SK-N-SH (cell line): ENCODE measurements at regions of chr4 and their contacts with region 1.

Region 1: GRCh38 chr4:167622481-167623246 is 388.4 kb upstream of the SPOCK3 start:
- DNase-seq: peak; percentile 53
- H3K4me3 ChIP-seq: no peak overlapping the region; a peak in 1 of 4 replicates
- H3K27ac ChIP-seq: no peak overlapping the region
- H3K4me1 ChIP-seq: no peaks in the 10 kb centered on the region
- H3K27me3 ChIP-seq: no peaks in the 10 kb centered on the region
- CTCF ChIP-seq: peak; percentile 90
- EP300 ChIP-seq: no peak
- RAD21 ChIP-seq: peak; percentile 65

Region 2: DNA sequence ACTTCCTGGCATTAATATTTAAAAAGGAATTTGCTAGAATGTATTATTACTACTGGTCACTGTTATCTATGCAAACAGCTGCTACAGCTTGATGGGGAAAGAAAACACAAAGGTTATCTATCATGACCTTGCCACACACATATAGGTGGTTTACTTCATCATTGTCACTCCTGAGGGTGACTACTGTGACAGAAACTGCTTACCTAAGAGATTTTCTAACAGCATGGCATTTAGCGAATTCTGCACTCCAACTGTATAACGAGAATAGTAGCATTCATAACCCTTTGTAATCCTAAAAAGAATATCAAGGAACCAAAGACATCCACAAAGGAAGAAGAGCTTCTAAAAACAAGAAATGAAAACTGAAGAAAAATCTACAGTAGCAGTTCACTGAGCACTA is 313.8 kb before region 1 on chr4:
- CTCF ChIA-PET with region 1: no interaction called
- POLR2A ChIA-PET with region 1: no interaction called
- DNase-seq: no peak
- H3K4me3 ChIP-seq: no peak overlapping the region
- H3K27ac ChIP-seq: no peak overlapping the region
- H3K4me1 ChIP-seq: no peaks in the 10 kb centered on the region
- H3K27me3 ChIP-seq: no peaks in the 10 kb centered on the region
- CTCF ChIP-seq: no peak
- EP300 ChIP-seq: no peak
- RAD21 ChIP-seq: no peak

Region 3: DNA sequence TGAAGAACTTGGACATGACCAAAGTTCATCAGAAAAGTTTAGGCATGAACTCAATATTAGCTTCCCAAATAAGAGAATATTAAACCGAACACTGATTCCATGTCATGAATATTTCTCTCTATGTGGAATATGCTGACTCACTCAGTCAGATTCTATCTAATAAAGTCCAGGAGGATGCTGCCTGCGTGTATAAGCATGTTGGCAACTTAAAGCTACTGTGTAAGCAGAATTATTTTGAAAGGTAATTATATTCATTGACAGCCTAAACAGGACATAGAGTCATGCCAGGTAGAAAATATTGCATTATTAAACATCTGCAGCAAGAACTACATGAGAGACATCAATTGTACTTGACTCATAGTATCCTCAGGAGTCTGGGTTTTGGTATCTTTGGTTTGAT is 20.5 kb before region 1 on chr4:
- CTCF ChIA-PET with region 1: interaction called, 15 read pairs
- POLR2A ChIA-PET with region 1: no interaction called
- DNase-seq: no peak
- H3K4me3 ChIP-seq: no peak overlapping the region
- H3K27ac ChIP-seq: no peak overlapping the region
- H3K4me1 ChIP-seq: no peaks in the 10 kb centered on the region
- H3K27me3 ChIP-seq: no peaks in the 10 kb centered on the region
- CTCF ChIP-seq: no peak
- EP300 ChIP-seq: no peak
- RAD21 ChIP-seq: no peak

Region 4: GRCh38 chr4:167642250-167642649 is 19.6 kb after region 1 on chr4:
- CTCF ChIA-PET with region 1: interaction called, 19 read pairs
- POLR2A ChIA-PET with region 1: no interaction called
- DNase-seq: no peak
- H3K4me3 ChIP-seq: no peak overlapping the region
- H3K27ac ChIP-seq: no peak overlapping the region
- H3K4me1 ChIP-seq: no peaks in the 10 kb centered on the region
- H3K27me3 ChIP-seq: no peaks in the 10 kb centered on the region
- CTCF ChIP-seq: no peak
- EP300 ChIP-seq: no peak
- RAD21 ChIP-seq: no peak